Transverse colon (tissue), 4 donors: ENCODE measurements at regions of chr15 and their contacts with region 1.

Region 1: GRCh38 chr15:90086868-90087268 is 15.4 kb downstream of the IDH2 start:
- DNase-seq: peak; percentile 55
- H3K4me3 ChIP-seq: no peak overlapping the region
- H3K27ac ChIP-seq: no peak overlapping the region
- H3K4me1 ChIP-seq: peaks cover 0 to 8% (median 2%) of the 10 kb centered on the region in 4 donors
- H3K27me3 ChIP-seq: no peaks in the 10 kb centered on the region
- CTCF ChIP-seq: peak; percentile 56 to 68 (median 60)
- EP300 ChIP-seq: no peak
- POLR2A ChIP-seq: no peak

Region 2: GRCh38 chr15:89587952-89588351 is 498.9 kb before region 1 on chr15:
- in situ Hi-C with region 1: no loop called
- intact Hi-C with region 1: no loop called
- DNase-seq: no peak
- H3K4me3 ChIP-seq: no peak overlapping the region
- H3K27ac ChIP-seq: no peak overlapping the region
- H3K4me1 ChIP-seq: no peaks in the 10 kb centered on the region
- H3K27me3 ChIP-seq: no peaks in the 10 kb centered on the region
- CTCF ChIP-seq: no peak
- EP300 ChIP-seq: no peak
- POLR2A ChIP-seq: no peak

Region 3: GRCh38 chr15:89740137-89740536 is 346.7 kb before region 1 on chr15:
- in situ Hi-C with region 1: loop called in 1 of 4 experiments (anchors 25 kb)
- intact Hi-C with region 1: no loop called
- DNase-seq: peak; percentile 67
- H3K4me3 ChIP-seq: no peak overlapping the region
- H3K27ac ChIP-seq: no peak overlapping the region
- H3K4me1 ChIP-seq: peaks cover 0 to 3% (median 0%) of the 10 kb centered on the region in 4 donors
- H3K27me3 ChIP-seq: no peaks in the 10 kb centered on the region
- CTCF ChIP-seq: peak; percentile 92 to 96 (median 94)
- EP300 ChIP-seq: no peak
- POLR2A ChIP-seq: no peak

Region 4: DNA sequence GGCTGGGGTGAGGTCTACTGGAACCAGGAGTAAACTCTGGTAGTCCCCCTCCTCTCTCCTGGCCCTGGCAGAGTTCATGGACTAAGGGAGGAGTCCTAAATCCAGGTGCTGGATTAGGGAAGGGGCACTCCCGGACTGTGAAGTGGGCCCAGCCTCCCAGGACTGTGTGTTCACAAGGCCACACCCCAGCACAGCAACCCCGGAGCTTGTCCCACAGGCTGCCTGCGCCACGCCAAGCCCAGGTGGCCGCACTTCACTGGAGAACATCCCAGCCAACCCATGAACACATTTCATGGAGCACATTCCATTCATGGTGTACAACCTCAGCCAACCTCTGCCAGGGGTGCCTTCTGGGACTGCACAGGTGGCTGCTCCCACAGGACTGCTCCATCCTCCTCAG is 182.3 kb before region 1 on chr15:
- in situ Hi-C with region 1: loop called in 1 of 4 experiments (anchors 10 kb)
- intact Hi-C with region 1: loop called (anchors 10 kb)
- DNase-seq: no peak
- H3K4me3 ChIP-seq: no peak overlapping the region
- H3K27ac ChIP-seq: no peak overlapping the region
- H3K4me1 ChIP-seq: peaks cover 0 to 6% (median 0%) of the 10 kb centered on the region in 4 donors
- H3K27me3 ChIP-seq: no peaks in the 10 kb centered on the region
- CTCF ChIP-seq: no peak
- EP300 ChIP-seq: no peak
- POLR2A ChIP-seq: no peak

Region 5: GRCh38 chr15:90151989-90152645 is 65.2 kb after region 1 on chr15:
- in situ Hi-C with region 1: no loop called
- intact Hi-C with region 1: no loop called
- DNase-seq: no peak
- H3K4me3 ChIP-seq: no peak overlapping the region
- H3K27ac ChIP-seq: no peak overlapping the region
- H3K4me1 ChIP-seq: peaks cover 0 to 32% (median 16%) of the 10 kb centered on the region in 4 donors
- H3K27me3 ChIP-seq: no peaks in the 10 kb centered on the region
- CTCF ChIP-seq: no peak
- EP300 ChIP-seq: no peak
- POLR2A ChIP-seq: no peak

Region 6: GRCh38 chr15:90320061-90320884 is 233.4 kb after region 1 on chr15:
- in situ Hi-C with region 1: no loop called
- intact Hi-C with region 1: no loop called
- DNase-seq: peak; percentile 79
- H3K4me3 ChIP-seq: peak overlapping the region in 1 of 4 donors; percentile 37
- H3K27ac ChIP-seq: peak overlapping the region; percentile 38 to 75 (median 58)
- H3K4me1 ChIP-seq: peaks cover 11 to 28% (median 20%) of the 10 kb centered on the region in 4 donors
- H3K27me3 ChIP-seq: no peaks in the 10 kb centered on the region
- CTCF ChIP-seq: peak; percentile 98 to 99 (median 99)
- EP300 ChIP-seq: no peak
- POLR2A ChIP-seq: no peak